Mammary epithelial cell (primary cell): ENCODE measurements at regions of chr7 and their contacts with region 1.

Region 1: DNA sequence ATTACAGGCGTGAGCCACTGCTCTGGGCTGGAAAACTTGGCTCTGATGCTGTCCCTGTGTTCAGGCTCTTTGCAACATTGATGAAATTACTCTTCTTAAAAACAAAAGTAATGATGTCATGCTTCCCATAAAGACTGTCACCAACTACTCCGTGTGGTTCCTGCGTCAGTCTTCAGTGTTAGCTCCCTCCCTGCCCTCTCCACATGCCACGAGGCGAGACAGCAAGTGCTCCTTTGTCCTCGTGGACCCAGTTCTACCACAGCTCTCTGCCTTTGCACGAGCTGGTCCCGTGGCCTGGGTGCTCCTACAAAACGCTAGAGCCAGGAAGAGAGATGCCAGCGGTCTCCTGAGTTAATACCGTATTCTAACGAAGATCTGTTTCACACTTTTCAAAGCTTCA is 194.5 kb downstream of the SDK1 start:
- DNase-seq: no peak
- H3K4me3 ChIP-seq: no peak overlapping the region
- H3K27ac ChIP-seq: no peak overlapping the region
- H3K4me1 ChIP-seq: no peaks in the 10 kb centered on the region
- H3K27me3 ChIP-seq: no peaks in the 10 kb centered on the region
- CTCF ChIP-seq: no peak

Region 2: GRCh38 chr7:3559278-3559677 is 63.7 kb after region 1 on chr7:
- CTCF ChIA-PET with region 1: no interaction called
- dilution Hi-C with region 1: loop called (anchors 5 kb)
- in situ Hi-C with region 1: no loop called
- intact Hi-C with region 1: no loop called
- DNase-seq: peak; percentile 83
- H3K4me3 ChIP-seq: no peak overlapping the region
- H3K27ac ChIP-seq: no peak overlapping the region
- H3K4me1 ChIP-seq: no peaks in the 10 kb centered on the region
- H3K27me3 ChIP-seq: no peaks in the 10 kb centered on the region
- CTCF ChIP-seq: no peak

Region 3: DNA sequence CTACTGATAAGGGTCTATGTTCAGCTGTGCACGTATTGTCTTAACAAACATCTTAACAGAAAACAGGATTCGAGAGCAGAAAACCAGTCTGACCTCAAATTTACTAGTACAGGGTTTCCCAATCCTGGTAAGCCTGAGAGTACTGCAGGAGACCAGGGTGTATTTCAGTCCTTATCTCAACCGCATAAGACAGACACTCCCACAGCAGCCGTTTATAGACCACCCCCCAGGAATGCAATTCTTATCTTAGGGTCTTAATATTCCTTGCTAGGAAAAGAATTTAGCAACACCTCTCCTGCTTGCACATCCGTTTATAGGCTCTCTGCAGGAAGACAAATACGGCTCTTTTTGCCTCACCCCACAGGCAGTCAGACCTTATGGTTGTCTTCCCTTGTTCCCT is 82.9 kb after region 1 on chr7:
- CTCF ChIA-PET with region 1: no interaction called
- dilution Hi-C with region 1: no loop called
- in situ Hi-C with region 1: no loop called
- intact Hi-C with region 1: no loop called
- DNase-seq: no peak
- H3K4me3 ChIP-seq: no peak overlapping the region
- H3K27ac ChIP-seq: no peak overlapping the region
- H3K4me1 ChIP-seq: no peaks in the 10 kb centered on the region
- H3K27me3 ChIP-seq: no peaks in the 10 kb centered on the region
- CTCF ChIP-seq: no peak